ENCODE measurements at regions of chr10 and their contacts with region 1.

Region 1: GRCh38 chr10:1048732-1049424 is at the start of gene IDI1:
- DNase-seq: peak; percentile 99
- H3K4me3 ChIP-seq: peak within 1 kb of the TSS; percentile 81 to 98 (median 92)
- H3K27ac ChIP-seq: peak within 1 kb of the TSS; percentile 96
- H3K4me1 ChIP-seq: peaks cover 32% of the 10 kb centered on the region
- H3K27me3 ChIP-seq: no peaks in the 10 kb centered on the region
- CTCF ChIP-seq: no peak
- total RNA-seq, gene IDI1: 54.2 to 80.3 TPM

Region 2: GRCh38 chr10:819326-819725 is 229.6 kb before region 1 on chr10:
- CTCF ChIA-PET with region 1: no interaction called
- dilution Hi-C with region 1: loop called (anchors 5 kb)
- in situ Hi-C with region 1: no loop called
- intact Hi-C with region 1: no loop called
- DNase-seq: no peak
- H3K4me3 ChIP-seq: no peak overlapping the region
- H3K27ac ChIP-seq: no peak overlapping the region
- H3K4me1 ChIP-seq: peaks cover 3% of the 10 kb centered on the region
- H3K27me3 ChIP-seq: no peaks in the 10 kb centered on the region
- CTCF ChIP-seq: no peak

Region 3: DNA sequence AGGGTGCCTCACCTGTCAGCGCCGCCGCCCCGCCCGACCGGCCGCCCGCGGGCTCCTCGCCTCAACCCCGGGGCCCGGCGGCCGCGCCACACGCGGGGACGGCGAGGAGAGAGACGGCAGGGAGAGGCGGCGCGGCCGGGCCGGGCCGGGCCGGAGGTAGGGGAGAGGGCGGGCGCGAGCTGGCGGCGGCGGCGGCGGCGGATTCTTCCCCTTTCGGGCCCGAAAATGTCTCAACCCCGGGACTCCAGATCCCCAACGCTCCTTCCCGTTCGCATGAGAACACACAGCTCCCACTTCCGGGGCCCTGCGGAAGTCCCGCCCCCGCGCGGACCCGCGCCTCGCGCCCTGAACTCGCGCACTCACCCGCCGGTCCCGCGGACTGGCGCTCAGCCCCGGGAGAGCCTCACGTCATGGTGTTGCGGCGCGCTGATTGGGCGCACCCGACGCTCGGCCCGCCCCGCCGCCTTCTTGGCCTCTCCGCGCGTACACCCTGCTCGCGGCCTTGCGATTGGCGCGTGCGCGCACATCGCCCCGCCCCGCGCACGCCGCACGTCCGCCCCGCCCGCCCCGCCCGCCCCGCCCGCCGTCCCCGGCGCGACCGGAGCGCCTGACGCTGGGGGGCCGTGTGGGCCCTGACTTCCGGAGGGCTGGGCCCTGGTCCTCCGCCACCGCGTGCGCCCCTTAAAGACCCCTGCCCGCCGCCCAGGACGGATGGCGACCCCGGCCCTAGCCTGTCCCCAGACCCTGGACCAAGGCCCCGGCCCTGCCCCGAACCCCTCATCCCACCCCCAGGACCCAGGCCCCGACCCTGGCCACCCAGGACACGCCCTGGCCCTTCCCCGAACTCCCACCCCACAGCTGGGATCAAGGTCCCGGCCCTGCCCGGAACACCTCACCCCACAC is 117.2 kb before region 1 on chr10 and contains the start of gene LARP4B:
- CTCF ChIA-PET with region 1: no interaction called
- dilution Hi-C with region 1: no loop called
- in situ Hi-C with region 1: no loop called
- intact Hi-C with region 1: loop called (anchors 5 kb)
- DNase-seq: peak; percentile 98
- H3K4me3 ChIP-seq: peak within 1 kb of the TSS; percentile 61 to 87 (median 86)
- H3K27ac ChIP-seq: peak within 1 kb of the TSS; percentile 83
- H3K4me1 ChIP-seq: peaks cover 14% of the 10 kb centered on the region
- H3K27me3 ChIP-seq: no peaks in the 10 kb centered on the region
- CTCF ChIP-seq: no peak
- total RNA-seq, gene LARP4B: 49.8 to 103 TPM

Region 4: GRCh38 chr10:987870-988666 is 60.8 kb before region 1 on chr10 and contains the start of gene GTPBP4:
- CTCF ChIA-PET with region 1: interaction called, 6 read pairs
- dilution Hi-C with region 1: no loop called
- in situ Hi-C with region 1: no loop called
- intact Hi-C with region 1: loop called (anchors 2 kb)
- DNase-seq: peak; percentile 93
- H3K4me3 ChIP-seq: peak within 1 kb of the TSS; percentile 89 to 99 (median 98)
- H3K27ac ChIP-seq: peak within 1 kb of the TSS; percentile 93
- H3K4me1 ChIP-seq: peaks cover 32% of the 10 kb centered on the region
- H3K27me3 ChIP-seq: no peaks in the 10 kb centered on the region
- CTCF ChIP-seq: peak in 1 of 2 donors; percentile 19
- total RNA-seq, gene GTPBP4: 31.0 to 114 TPM

Region 5: DNA sequence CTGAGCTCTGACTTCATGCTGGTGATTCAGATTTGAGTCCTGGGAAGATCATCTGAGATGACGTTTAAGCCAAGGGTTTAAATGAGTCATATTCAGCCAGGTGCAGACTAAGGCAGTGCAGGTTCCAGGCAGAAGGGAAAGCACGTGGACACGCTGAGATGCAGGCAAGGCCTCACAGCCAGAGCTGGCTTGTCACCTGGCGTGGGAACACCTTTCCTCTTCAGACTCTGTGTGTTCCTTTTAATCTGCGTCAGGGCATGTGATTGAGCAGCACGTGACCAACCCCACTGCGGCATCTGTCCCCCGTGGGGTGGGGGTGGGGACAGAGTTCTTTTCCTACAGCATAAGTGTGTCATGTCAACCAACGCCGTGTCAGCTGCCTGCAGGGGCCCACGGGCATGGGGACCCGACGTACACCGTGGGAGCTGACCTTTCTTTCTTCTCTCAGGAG is 12.5 kb before region 1 on chr10:
- CTCF ChIA-PET with region 1: no interaction called
- dilution Hi-C with region 1: no loop called
- in situ Hi-C with region 1: no loop called
- intact Hi-C with region 1: loop called (anchors 1 kb)
- DNase-seq: peak; percentile 93
- H3K4me3 ChIP-seq: no peak overlapping the region
- H3K27ac ChIP-seq: peak overlapping the region; percentile 13
- H3K4me1 ChIP-seq: peaks cover 17% of the 10 kb centered on the region
- H3K27me3 ChIP-seq: no peaks in the 10 kb centered on the region
- CTCF ChIP-seq: no peak

Measured in mammary epithelial cell (primary cell).